ENCODE measurements at regions of chr13 and their contacts with region 1.

Region 1: DNA sequence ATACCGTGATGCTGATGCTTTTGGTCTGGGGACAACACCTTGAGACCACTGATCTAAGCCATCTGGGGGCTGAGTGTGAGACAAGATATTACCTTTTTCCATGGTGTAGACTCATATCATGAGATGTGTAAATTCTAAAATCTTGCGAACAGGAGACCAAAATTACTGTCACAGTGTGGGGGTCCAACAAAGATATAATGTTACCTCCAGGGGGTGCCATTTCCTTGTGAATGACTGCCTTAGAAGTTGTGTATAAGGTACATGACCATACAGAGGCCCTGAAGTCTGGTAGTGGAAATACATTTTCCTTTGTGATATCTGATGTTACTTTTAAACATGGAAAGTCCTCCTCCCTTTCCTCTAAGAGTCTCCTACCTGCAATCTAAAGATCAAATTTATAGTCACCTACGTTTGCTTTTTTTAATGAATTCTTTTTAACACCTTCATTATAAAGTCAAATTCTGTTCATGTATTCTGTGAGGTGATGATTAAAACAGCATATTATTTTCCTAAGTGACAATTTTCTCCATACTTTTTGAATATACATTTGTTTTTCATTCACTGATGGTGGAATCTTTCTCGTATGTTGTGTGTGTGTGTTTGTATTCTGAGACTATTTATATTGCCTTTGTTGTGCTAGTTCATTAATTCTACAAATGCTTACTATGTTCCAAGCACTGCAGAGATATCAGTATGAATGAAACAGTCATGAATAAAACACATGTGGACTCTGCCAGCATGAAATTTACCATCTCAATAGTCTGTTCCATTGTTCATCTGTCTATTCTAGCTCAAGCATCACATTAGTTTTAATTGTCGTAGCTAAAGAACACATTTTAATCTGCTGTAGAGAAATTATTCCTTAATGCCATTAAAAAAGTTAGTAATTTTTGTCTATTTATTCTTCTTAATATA is 113.7 kb downstream of the RFC3 start:
- DNase-seq: no peak
- ATAC-seq: peak; percentile 77

Region 2: DNA sequence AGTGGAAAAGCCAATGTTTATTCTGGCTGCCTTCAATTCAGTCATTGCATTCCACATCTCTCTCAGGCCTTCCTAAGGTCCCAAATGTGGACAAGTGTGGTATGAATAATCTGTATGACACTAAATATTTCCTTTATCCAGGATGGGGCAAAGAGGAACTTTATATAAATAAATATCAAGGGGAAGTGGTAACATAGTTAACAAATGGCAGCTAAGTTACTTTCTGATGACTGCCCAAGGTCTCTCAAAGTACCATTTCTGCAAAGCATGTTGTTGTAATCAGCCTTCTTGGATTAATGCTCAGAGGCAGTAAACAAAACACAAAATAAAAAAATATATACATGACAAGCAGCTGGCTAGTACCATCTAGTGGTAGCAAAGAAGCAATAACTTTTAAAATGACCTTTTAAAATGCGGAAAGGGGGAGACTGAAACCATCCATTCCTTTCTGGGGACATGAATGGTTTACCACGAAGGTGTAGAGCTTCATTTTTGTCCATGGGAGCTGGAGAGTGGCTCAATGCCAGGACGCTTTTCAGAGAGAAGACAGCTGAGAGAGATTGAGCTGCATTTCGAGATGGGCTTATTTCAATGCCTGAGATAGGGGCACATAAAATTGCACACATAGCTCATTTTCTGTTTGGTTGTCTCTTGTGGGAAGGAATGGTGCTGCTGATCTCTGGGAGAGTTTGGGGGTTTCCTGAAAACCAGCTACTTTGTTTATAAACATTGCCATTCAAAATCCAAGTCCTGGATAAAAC is 145.5 kb after region 1 on chr13:
- intact Hi-C with region 1: loop called (anchors 5 kb)
- DNase-seq: no peak
- ATAC-seq: peak; percentile 43

Region 3: GRCh38 chr13:35157143-35157755 is 1225.6 kb after region 1 on chr13:
- intact Hi-C with region 1: loop called (anchors 5 kb)
- DNase-seq: no peak
- ATAC-seq: peak; percentile 66

Measured in Right ventricle myocardium superior (tissue), 1 donor.